Activated CD8-positive, alpha-beta T cell treated with anti-CD3 and anti-CD28 coated beads, Interleukin-2, amount 10 ng/mL, durations not matched to agents 7 days and 5 days (primary cell): ENCODE measurements at regions of chr9 and their contacts with region 1.

Region 1: DNA sequence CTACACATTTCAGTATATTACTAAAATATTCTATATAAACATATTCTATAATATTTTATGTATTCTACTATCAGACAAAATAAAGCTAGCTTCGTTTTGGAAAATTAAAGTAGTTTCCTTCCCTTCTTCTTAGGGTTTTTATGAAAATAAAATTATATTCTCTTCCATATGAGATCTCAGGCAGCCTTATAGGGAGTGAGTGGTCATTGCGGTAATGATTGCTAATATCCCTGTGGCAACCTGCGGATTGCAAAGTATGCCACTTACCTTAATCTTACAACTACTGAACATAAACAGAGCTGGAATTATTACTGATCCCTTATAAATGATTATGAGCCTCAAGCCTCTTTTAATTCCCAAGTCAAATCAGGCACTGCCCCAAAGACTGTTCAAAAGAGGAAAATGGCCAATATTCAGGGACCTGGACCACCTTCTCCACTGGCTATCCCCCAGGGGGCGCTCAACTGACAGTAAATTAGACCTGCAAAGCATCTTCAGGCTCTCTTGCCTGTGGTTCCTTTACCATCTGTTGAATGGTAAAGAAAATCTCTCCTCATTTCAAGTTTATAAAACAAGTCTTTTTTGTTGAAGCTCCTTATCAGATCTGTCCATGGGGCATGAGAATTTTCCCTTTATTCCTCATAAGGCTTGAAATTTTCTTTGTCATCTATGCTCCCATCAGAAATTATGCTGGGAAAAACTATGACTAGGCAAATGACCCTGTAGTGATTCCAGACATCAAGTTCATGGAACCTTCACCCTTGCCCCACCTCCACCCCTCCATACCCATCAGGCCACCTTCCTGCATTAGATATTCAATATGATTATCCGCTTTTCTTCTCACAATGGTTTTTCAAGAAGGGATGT is 163.9 kb downstream of the CEMIP2 start:
- DNase-seq: peak; percentile 88
- ATAC-seq: peak; percentile 89
- H3K4me3 Mint-ChIP-seq: no peak overlapping the region
- H3K27ac Mint-ChIP-seq: no peak overlapping the region
- H3K4me1 Mint-ChIP-seq: no peaks in the 10 kb centered on the region
- H3K27me3 Mint-ChIP-seq: peaks cover 9% of the 10 kb centered on the region

Region 2: GRCh38 chr9:71549023-71549422 is 55.4 kb before region 1 on chr9:
- CTCF ChIA-PET with region 1: no interaction called
- POLR2A ChIA-PET with region 1: no interaction called
- DNase-seq: no peak
- ATAC-seq: no peak
- H3K4me3 Mint-ChIP-seq: no peak overlapping the region
- H3K27ac Mint-ChIP-seq: no peak overlapping the region
- H3K4me1 Mint-ChIP-seq: no peaks in the 10 kb centered on the region
- H3K27me3 Mint-ChIP-seq: peaks cover 32% of the 10 kb centered on the region

Region 3: DNA sequence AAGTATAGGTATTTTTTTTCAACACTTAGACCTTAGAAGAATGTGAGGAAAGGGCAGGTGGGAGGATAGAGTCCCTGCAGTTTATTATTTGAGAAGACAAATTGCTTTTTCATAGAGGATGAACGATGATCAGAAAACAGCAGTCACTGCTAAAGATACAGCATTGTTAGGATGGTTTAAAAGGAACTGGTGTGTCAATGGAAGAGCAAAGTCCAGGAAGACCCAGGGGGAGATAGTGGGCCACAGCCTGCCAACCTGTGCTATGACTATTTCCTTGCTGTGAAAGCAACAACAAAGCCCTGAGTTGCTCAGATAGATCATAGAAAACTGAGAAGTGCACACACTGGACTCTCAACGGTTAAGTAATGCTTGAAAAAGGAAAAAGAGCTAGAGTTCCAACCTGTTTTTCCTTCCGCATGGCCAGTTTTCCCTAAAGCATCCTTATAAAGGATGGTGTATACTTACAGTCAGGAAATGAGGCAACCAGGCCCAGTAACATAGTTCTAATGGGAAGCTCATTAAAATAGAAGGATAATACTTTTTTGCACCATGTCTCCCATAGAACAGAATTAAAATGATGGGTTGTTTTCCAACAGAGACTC is 10.1 kb after region 1 on chr9:
- CTCF ChIA-PET with region 1: interaction called, 19 read pairs
- POLR2A ChIA-PET with region 1: no interaction called
- DNase-seq: no peak
- ATAC-seq: no peak
- H3K4me3 Mint-ChIP-seq: no peak overlapping the region
- H3K27ac Mint-ChIP-seq: no peak overlapping the region
- H3K4me1 Mint-ChIP-seq: no peaks in the 10 kb centered on the region
- H3K27me3 Mint-ChIP-seq: peaks cover 3% of the 10 kb centered on the region

Region 4: GRCh38 chr9:71670121-71670520 is 65.7 kb after region 1 on chr9:
- CTCF ChIA-PET with region 1: no interaction called
- POLR2A ChIA-PET with region 1: no interaction called
- DNase-seq: no peak
- ATAC-seq: no peak
- H3K4me3 Mint-ChIP-seq: no peak overlapping the region
- H3K27ac Mint-ChIP-seq: no peak overlapping the region
- H3K4me1 Mint-ChIP-seq: no peaks in the 10 kb centered on the region
- H3K27me3 Mint-ChIP-seq: peaks cover 5% of the 10 kb centered on the region

Region 5: GRCh38 chr9:71683598-71684235 is 79.3 kb after region 1 on chr9:
- CTCF ChIA-PET with region 1: interaction called, 10 read pairs
- POLR2A ChIA-PET with region 1: interaction called, 3 read pairs
- DNase-seq: no peak
- ATAC-seq: no peak
- H3K4me3 Mint-ChIP-seq: peak overlapping the region; percentile 34
- H3K27ac Mint-ChIP-seq: peak overlapping the region; percentile 72
- H3K4me1 Mint-ChIP-seq: peaks cover 35% of the 10 kb centered on the region
- H3K27me3 Mint-ChIP-seq: no peaks in the 10 kb centered on the region

Region 6: GRCh38 chr9:71716138-71716909 is 111.9 kb after region 1 on chr9:
- CTCF ChIA-PET with region 1: interaction called, 24 read pairs
- POLR2A ChIA-PET with region 1: no interaction called
- DNase-seq: no peak
- ATAC-seq: no peak
- H3K4me3 Mint-ChIP-seq: no peak overlapping the region
- H3K27ac Mint-ChIP-seq: peak overlapping the region; percentile 57
- H3K4me1 Mint-ChIP-seq: no peaks in the 10 kb centered on the region
- H3K27me3 Mint-ChIP-seq: no peaks in the 10 kb centered on the region